IMR-90 (cell line): ENCODE measurements at regions of chr5 and their contacts with region 1.

Region 1: DNA sequence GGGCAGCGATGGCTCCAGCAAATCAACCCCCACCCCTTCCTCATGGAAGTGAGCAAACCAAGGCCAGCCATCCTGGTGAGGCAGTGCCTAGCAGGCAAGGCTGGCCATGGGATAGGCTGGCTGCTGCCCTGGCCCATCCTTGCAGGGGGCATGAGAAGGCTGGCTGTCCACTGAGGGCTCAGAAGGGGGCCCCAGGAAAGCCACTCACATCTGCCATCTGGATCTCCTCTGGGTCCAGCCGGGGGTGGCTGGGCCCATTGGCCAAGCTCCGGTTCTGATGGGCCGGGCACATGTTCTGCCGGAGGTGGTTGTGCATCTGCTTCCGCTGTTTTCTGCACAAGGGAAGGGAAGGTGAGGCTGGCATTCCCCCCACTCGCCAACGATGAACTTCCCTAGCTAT is 57.1 kb downstream of the PSD2 start:
- DNase-seq: no peak
- ATAC-seq: no peak
- H3K4me3 ChIP-seq: no peak overlapping the region
- H3K27ac ChIP-seq: no peak overlapping the region
- H3K4me1 ChIP-seq: no peaks in the 10 kb centered on the region
- H3K27me3 ChIP-seq: peaks cover 66% of the 10 kb centered on the region
- CTCF ChIP-seq: no peak
- POLR2A ChIP-seq: no peak
- RAD21 ChIP-seq: no peak

Region 2: GRCh38 chr5:139704748-139705147 is 147.9 kb before region 1 on chr5:
- CTCF ChIA-PET with region 1: no interaction called
- POLR2A ChIA-PET with region 1: interaction called, 10 read pairs
- dilution Hi-C with region 1: no loop called
- in situ Hi-C with region 1: no loop called
- intact Hi-C with region 1: no loop called
- DNase-seq: no peak
- ATAC-seq: no peak
- H3K4me3 ChIP-seq: no peak overlapping the region
- H3K27ac ChIP-seq: no peak overlapping the region
- H3K4me1 ChIP-seq: peaks cover 3% of the 10 kb centered on the region; the same call in 1 of the 2 replicates
- H3K27me3 ChIP-seq: no peaks in the 10 kb centered on the region; the same call in 1 of the 2 replicates
- CTCF ChIP-seq: no peak
- POLR2A ChIP-seq: no peak
- RAD21 ChIP-seq: no peak